ENCODE measurements at regions of chr3 and their contacts with region 1.

Region 1: GRCh38 chr3:27503526-27503925 is 19.3 kb upstream of the SLC4A7 start:
- DNase-seq: peak; percentile 17
- H3K4me3 ChIP-seq: no peak overlapping the region
- H3K27ac ChIP-seq: no peak overlapping the region
- H3K4me1 ChIP-seq: peaks cover 12% of the 10 kb centered on the region
- H3K27me3 ChIP-seq: no peaks in the 10 kb centered on the region
- CTCF ChIP-seq: no peak

Region 2: DNA sequence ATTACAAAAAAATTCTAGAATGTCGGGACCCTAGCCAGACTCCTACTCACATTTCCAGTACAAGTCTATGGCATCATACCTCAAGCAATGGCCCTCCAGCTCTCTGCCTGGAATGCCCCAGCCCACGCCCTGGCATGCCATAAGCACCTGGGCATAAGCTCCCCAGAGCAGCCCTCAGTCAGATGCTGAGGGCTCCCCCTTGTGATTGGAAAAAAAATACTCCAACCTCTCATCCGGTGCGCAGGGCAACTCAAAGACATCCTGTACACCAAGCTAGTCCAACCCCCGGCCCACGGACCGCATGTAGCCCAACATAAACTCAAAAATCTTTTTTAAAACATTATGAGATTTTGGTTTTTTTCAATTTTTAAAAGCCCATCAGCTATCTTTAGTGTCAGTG is 249.7 kb before region 1 on chr3:
- CTCF ChIA-PET with region 1: interaction called, 10 read pairs
- dilution Hi-C with region 1: no loop called
- in situ Hi-C with region 1: no loop called
- intact Hi-C with region 1: no loop called
- DNase-seq: peak; percentile 76
- H3K4me3 ChIP-seq: no peak overlapping the region
- H3K27ac ChIP-seq: no peak overlapping the region
- H3K4me1 ChIP-seq: peaks cover 3% of the 10 kb centered on the region
- H3K27me3 ChIP-seq: no peaks in the 10 kb centered on the region
- CTCF ChIP-seq: peak; percentile 52 to 82

Region 3: GRCh38 chr3:27521872-27522265 is 18.3 kb after region 1 on chr3:
- CTCF ChIA-PET with region 1: no interaction called
- dilution Hi-C with region 1: no loop called
- in situ Hi-C with region 1: no loop called
- intact Hi-C with region 1: loop called (anchors 2 kb)
- DNase-seq: no peak
- H3K4me3 ChIP-seq: no peak overlapping the region
- H3K27ac ChIP-seq: no peak overlapping the region
- H3K4me1 ChIP-seq: peaks cover 28% of the 10 kb centered on the region
- H3K27me3 ChIP-seq: no peaks in the 10 kb centered on the region
- CTCF ChIP-seq: no peak

Region 4: DNA sequence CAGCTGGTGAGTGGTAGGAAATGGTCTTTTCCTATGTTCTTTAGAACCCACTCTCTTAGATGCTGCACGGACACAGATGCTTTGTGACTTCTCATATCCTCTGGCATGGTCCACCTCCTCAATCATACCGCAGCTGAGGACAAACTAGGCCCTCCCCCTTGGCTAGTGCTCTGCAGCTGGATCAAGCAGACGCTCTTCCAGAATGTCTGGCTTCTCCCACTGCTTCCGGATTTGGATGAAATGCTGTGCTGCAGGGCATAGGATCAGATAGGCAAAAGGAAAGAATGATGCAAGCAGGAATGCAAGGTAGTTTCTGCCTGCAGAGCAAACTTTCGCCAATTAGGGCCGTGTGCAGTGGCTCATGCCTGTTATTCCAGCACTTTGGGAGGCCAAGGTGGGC is 56.3 kb after region 1 on chr3:
- CTCF ChIA-PET with region 1: no interaction called
- dilution Hi-C with region 1: loop called (anchors 10 kb)
- in situ Hi-C with region 1: no loop called
- intact Hi-C with region 1: no loop called
- DNase-seq: peak; percentile 37
- H3K4me3 ChIP-seq: no peak overlapping the region
- H3K27ac ChIP-seq: no peak overlapping the region
- H3K4me1 ChIP-seq: peaks cover 10% of the 10 kb centered on the region
- H3K27me3 ChIP-seq: no peaks in the 10 kb centered on the region
- CTCF ChIP-seq: no peak